GM10248 (cell line): ENCODE measurements at regions of chr12 and their contacts with region 1.

Region 1: GRCh38 chr12:57248934-57249742 is 1.8 kb downstream of the STAC3 start:
- DNase-seq: peak; percentile 53
- CTCF ChIP-seq: no peak

Region 2: DNA sequence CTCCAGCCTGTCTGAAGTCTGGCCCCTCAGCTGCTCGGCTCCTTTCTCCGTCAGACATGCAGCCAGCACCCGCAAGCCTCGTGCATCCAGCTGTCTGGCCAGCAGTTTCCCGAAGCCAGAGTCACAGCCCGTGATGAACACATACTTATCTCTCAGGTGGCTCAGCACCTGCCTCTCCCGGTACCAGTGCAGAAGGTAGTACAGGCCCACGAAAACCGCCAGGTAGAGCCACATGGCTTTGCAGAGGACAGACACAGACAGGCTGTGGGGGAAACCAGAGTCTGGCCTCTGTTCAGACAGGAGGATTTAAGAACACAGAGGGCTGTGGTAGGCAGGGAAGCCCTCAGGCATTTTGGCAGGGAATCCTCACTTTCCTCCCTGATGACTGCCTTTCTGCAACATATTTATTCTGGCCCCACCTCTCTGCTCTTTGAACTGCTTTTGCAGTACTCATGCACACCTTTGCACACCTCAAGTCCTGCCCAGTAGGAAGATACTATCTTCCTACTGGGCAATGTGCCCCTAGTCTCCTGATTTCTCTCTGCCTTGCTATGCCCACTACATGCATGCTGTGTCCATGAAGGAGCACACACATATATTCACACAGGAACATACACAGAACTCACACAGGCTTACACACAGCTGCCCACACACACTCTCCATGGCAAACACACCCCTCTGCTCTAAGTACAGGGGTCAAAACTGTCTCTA is 291.8 kb before region 1 on chr12 and contains the start of gene RDH16:
- CTCF ChIA-PET with region 1: no interaction called
- POLR2A ChIA-PET with region 1: no interaction called
- DNase-seq: no peak
- CTCF ChIP-seq: no peak

Region 3: GRCh38 chr12:57229634-57230380 is 19.3 kb before region 1 on chr12 and contains the start of gene SHMT2:
- CTCF ChIA-PET with region 1: interaction called, 348 read pairs
- POLR2A ChIA-PET with region 1: no interaction called
- DNase-seq: peak; percentile 98
- CTCF ChIP-seq: no peak

Region 4: DNA sequence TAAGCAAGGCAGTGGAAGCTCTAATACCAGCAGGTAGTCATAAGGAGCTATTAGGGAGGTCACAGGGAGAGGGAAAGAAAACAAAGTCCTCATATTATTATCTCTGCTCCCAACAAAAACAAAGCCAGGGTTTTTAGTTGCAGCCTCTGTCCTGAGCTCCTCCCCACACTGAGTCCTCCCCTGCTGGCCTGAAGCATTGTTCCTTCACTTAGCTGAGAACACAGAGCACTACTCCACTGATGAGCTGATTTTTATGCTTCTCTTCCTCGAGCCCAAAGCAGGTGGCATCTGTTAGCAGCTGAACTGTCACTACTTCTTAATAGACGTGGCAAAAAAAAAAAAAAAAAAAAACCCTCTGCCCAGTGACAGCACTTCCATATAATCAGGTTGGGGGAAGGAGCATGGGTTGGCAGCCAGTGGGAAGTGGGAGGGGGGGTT is 12.3 kb after region 1 on chr12:
- CTCF ChIA-PET with region 1: interaction called, 52 read pairs
- POLR2A ChIA-PET with region 1: no interaction called
- DNase-seq: no peak
- CTCF ChIP-seq: no peak